ENCODE measurements at regions of chr12 and their contacts with region 1.

Region 1: DNA sequence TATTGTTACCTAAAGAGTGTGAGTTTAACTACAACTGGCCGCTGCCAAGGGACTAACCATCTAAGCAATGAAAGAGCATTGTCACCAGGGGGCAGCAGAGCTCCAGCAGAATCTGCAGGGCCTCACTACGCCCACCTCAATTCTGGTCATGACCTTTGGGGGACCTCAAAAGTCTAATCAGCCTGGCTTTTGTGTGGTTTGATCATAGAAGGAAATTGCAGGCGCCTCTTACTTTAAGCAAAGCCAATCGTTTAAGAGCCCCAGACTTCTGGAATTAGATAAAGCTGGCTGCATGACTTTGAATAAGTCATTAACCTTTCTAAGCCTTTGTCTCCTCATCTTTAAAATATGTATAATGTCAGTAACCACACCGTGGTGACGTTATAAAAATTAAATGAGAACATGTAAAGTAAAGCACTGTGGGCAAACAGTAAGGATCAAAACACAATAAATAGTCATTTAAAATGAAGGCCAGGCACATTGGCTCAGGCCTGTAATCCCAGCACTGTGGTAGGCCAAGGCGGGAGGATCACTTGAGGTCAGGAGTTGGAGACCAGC is 58.6 kb downstream of the TBX3 start:
- DNase-seq: peak; percentile 65 to 90
- ATAC-seq: peak; percentile 93 to 96
- H3K4me3 ChIP-seq: no peak overlapping the region
- H3K27ac ChIP-seq: peak overlapping the region; percentile 72 to 75
- H3K4me1 ChIP-seq: peaks cover 43% of the 10 kb centered on the region
- CTCF ChIP-seq: peak; percentile 86
- EP300 ChIP-seq: peak; percentile 63 to 86; a peak in 4 of 5 replicates
- POLR2A ChIP-seq: no peak
- RAD21 ChIP-seq: peak; percentile 94

Region 2: GRCh38 chr12:114611145-114612018 is 14.0 kb before region 1 on chr12:
- CTCF ChIA-PET with region 1: interaction called, 15 read pairs
- POLR2A ChIA-PET with region 1: no interaction called
- DNase-seq: peak; percentile 31 to 87
- ATAC-seq: peak; percentile 96 to 98
- H3K4me3 ChIP-seq: no peak overlapping the region
- H3K27ac ChIP-seq: peak overlapping the region; percentile 72
- H3K4me1 ChIP-seq: peaks cover 20% of the 10 kb centered on the region
- CTCF ChIP-seq: no peak
- EP300 ChIP-seq: peak in 1 of 2 experiments; percentile 31; a peak in 2 of 5 replicates
- POLR2A ChIP-seq: no peak
- RAD21 ChIP-seq: no peak

Region 3: GRCh38 chr12:114655934-114656749 is 30.8 kb after region 1 on chr12:
- CTCF ChIA-PET with region 1: interaction called, 36 read pairs
- POLR2A ChIA-PET with region 1: interaction called, 5 read pairs
- DNase-seq: peak; percentile 71 to 95
- ATAC-seq: peak; percentile 92 to 94
- H3K4me3 ChIP-seq: no peak overlapping the region
- H3K27ac ChIP-seq: peak overlapping the region; percentile 83 to 85
- H3K4me1 ChIP-seq: peaks cover 38% of the 10 kb centered on the region
- CTCF ChIP-seq: no peak
- EP300 ChIP-seq: peak; percentile 96 to 99
- POLR2A ChIP-seq: no peak
- RAD21 ChIP-seq: peak in 1 of 2 experiments; percentile 37; a peak in 3 of 5 replicates

Region 4: DNA sequence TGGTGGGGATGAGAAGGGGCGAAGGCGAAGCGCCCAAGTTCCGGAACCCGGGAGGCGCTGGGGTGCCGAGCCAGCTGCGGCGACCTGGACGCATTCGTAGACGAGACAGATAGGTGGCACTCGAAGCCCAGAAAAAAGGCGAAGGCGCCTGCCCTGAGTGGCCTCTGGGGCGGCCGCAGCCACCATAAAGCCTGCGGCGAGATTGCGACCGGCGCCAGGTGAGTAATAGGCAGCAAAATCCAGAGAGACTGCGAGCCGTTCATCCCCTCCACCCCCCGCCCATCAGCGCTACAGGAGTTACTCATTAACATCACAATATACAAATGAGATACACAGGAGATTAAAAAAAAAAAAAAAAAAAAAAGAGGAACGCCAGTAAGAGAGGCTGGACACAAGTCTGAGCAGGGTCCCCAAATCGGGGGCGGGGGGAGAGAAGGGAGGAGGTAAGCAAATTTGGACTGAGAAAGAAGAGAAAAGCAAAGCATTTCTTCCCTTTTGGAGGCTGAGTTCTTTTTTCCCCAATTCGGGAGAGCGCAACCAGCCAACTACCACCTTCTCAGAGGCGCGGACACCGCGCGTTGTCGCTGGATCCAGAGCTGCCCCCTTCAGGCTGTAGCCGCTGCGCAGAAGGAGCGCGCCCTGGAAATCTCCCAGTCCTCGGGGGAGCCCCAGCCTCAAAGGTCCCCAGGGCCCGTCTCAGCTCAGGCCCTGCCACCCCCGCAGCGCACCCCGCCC is 42.9 kb after region 1 on chr12:
- CTCF ChIA-PET with region 1: interaction called, 22 read pairs
- POLR2A ChIA-PET with region 1: no interaction called
- DNase-seq: peak; percentile 91 to 94
- ATAC-seq: peak; percentile 85 to 93
- H3K4me3 ChIP-seq: peak overlapping the region; percentile 57
- H3K27ac ChIP-seq: peak overlapping the region; percentile 84 to 92
- H3K4me1 ChIP-seq: peaks cover 22% of the 10 kb centered on the region; the same call in 2 of the 3 replicates
- CTCF ChIP-seq: peak; percentile 63
- EP300 ChIP-seq: no peak
- POLR2A ChIP-seq: no peak
- RAD21 ChIP-seq: peak; percentile 89 to 96

Measured in A549 (cell line).